ENCODE measurements at regions of chr15 and their contacts with region 1.

Region 1: DNA sequence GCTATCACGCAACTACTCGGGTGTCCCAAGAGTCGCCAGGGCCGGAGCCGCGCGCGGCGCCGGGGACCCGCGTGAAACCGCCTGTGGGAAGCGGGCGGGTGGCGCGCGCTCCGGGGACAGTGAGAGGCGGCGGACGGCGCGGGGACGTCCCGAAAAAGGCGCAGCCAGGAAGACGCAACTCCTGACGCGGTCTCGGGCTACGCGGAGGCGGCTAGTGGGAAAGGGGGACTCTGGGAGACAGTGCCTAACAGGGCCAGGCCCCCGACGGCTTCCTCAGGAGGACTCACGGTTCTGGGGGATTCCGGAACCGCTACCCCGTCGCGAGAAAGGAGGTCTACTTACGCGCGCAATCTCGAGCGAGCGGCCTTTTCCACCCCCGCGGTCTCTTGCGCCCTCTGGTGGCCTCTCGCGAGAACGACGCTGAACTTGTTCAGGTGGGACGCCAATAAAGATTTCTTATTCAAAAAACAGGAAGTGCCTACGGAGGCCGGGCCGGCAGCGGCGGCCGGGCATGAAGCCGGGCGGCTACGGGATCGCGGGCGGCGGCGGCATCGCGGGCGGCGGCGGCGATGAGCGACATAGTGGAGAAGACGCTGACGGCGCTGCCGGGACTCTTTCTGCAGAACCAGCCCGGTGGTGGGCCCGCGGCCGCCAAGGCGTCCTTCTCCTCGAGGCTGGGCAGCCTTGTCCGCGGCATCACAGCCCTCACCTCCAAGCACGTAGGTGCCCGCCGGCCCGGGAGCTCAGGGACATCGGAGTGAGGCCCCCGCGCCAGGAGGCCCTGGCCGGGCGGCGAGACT is at the start of gene AP4E1:
- DNase-seq: peak; percentile 89 to 97 (median 95)
- ATAC-seq: peak; percentile 52
- H3K4me3 ChIP-seq: peak within 1 kb of the TSS; percentile 74 to 85
- H3K4me3 Mint-ChIP-seq: peak within 1 kb of the TSS; percentile 89
- H3K27ac ChIP-seq: peak within 1 kb of the TSS; percentile 85 to 95
- H3K27ac Mint-ChIP-seq: peak within 1 kb of the TSS; percentile 99
- H3K4me1 ChIP-seq: peaks cover 11% of the 10 kb centered on the region
- H3K4me1 Mint-ChIP-seq: peaks cover 35% of the 10 kb centered on the region
- H3K27me3 ChIP-seq: no peaks in the 10 kb centered on the region
- H3K27me3 Mint-ChIP-seq: no peaks in the 10 kb centered on the region
- CTCF ChIP-seq: peak; percentile 94
- total RNA-seq, gene AP4E1: 6.8 to 8.1 TPM

Region 2: DNA sequence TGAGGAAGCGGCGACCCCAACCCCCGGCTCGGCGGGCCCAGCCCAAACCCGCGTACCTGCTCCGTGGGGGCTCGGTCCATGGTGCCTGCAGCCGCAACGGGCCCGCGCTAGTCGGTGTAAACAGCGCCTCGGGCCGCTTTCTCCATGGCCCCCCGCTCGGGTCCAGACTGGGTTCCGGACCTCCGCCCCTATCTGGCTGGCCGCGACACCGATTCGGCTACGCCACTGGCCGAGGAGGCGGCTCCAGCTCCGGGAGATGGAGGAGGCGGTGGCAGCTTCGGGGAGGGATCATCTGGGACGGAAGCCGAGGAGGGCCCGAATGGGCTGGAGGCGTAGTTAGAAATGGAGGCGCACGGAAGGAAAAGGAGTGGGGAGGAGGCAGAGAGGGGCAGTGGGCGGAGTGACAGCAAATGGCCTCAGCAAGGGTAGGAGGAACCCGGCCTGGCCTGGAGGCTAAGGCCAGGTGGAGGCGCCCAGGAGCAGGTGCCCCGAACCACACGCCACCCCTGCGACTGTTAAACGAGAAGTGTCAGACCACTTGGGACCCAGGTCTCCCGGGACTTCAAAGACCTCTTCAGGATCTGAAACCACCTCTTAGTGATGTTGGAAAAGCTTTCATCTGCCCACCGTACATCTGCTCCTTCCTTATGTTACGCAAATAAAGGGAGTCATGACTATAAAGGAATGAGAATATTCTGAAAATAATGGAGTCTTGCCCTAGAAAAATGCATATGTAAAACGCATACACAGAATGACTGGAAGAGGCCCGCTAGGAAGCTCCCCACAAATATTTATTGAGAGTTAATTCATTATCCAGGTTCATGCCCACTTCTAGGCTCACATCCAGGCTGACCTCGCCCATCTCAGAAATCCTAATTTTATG is 1861.9 kb before region 1 on chr15 and contains the start of gene SECISBP2L:
- CTCF ChIA-PET with region 1: no interaction called
- POLR2A ChIA-PET with region 1: no interaction called
- intact Hi-C with region 1: loop called (anchors 5 kb)
- DNase-seq: peak; percentile 76 to 95 (median 89)
- ATAC-seq: peak; percentile 94
- H3K4me3 ChIP-seq: peak within 1 kb of the TSS; percentile 89 to 95
- H3K4me3 Mint-ChIP-seq: peak within 1 kb of the TSS; percentile 97
- H3K27ac ChIP-seq: peak within 1 kb of the TSS; percentile 64 to 66
- H3K27ac Mint-ChIP-seq: peak within 1 kb of the TSS; percentile 91
- H3K4me1 ChIP-seq: peaks cover 30% of the 10 kb centered on the region
- H3K4me1 Mint-ChIP-seq: peaks cover 32% of the 10 kb centered on the region
- H3K27me3 ChIP-seq: no peaks in the 10 kb centered on the region
- H3K27me3 Mint-ChIP-seq: no peaks in the 10 kb centered on the region
- CTCF ChIP-seq: no peak
- total RNA-seq, gene SECISBP2L: 54.8 to 61.2 TPM

Region 3: DNA sequence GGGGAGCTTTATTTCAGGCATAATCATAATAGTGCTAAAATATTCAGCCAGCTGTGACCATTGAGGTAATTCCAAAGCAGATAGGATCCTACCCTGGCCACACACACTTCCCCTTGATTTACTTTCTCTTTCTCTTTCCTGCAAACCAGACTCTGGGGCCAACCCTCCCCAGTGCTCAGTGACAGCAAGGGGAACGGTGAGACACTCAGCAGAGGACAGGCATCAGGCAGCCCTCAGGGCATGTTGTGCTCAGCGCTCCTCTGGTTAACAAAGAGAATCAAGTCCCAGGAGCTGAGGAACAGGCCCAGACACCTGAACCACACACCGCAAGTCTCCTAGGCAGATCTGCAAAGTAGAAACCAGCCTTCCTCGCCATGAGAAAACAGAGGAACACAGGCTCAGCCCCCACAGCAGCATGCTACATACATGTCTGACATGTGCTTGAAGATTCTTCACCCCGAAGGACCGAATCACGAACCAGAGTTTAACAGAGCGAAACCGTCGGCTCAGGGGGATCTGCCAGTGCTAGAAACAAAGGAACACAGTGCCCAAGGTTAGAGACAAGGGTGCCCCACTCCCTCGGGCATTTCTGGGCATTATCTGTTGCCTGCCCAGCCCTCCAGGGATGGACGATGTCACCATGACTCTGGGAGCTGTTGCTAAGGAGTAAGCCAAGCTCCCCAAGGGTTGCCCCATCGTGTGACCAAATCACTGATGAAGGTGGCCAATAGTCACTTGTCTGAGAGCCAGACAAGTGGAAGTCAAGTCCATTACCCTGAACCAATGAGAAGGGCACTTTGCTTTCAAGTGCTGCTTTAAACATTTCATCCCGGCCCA is 660.4 kb before region 1 on chr15:
- CTCF ChIA-PET with region 1: no interaction called
- POLR2A ChIA-PET with region 1: no interaction called
- intact Hi-C with region 1: no loop called
- DNase-seq: peak in 5 of 9 experiments; percentile 15 to 79 (median 45)
- ATAC-seq: peak; percentile 96
- H3K4me3 ChIP-seq: peak overlapping the region; percentile 30
- H3K4me3 Mint-ChIP-seq: peak overlapping the region; percentile 80
- H3K27ac ChIP-seq: peak overlapping the region; percentile 39 to 64
- H3K27ac Mint-ChIP-seq: peak overlapping the region; percentile 92
- H3K4me1 ChIP-seq: peaks cover 11% of the 10 kb centered on the region
- H3K4me1 Mint-ChIP-seq: peaks cover 23% of the 10 kb centered on the region
- H3K27me3 ChIP-seq: no peaks in the 10 kb centered on the region
- H3K27me3 Mint-ChIP-seq: no peaks in the 10 kb centered on the region
- CTCF ChIP-seq: no peak

Region 4: GRCh38 chr15:50354838-50355618 is 553.4 kb before region 1 on chr15 and contains the start of gene GABPB1:
- CTCF ChIA-PET with region 1: no interaction called
- POLR2A ChIA-PET with region 1: interaction called, 5 read pairs
- intact Hi-C with region 1: loop called (anchors 1 to 2 kb)
- DNase-seq: peak; percentile 72 to 95 (median 85)
- ATAC-seq: peak; percentile 45
- H3K4me3 ChIP-seq: peak within 1 kb of the TSS; percentile 86 to 90
- H3K4me3 Mint-ChIP-seq: peak within 1 kb of the TSS; percentile 93
- H3K27ac ChIP-seq: peak within 1 kb of the TSS; percentile 94 to 97
- H3K27ac Mint-ChIP-seq: peak within 1 kb of the TSS; percentile 98
- H3K4me1 ChIP-seq: peaks cover 38% of the 10 kb centered on the region
- H3K4me1 Mint-ChIP-seq: peaks cover 55% of the 10 kb centered on the region
- H3K27me3 ChIP-seq: no peaks in the 10 kb centered on the region
- H3K27me3 Mint-ChIP-seq: no peaks in the 10 kb centered on the region
- CTCF ChIP-seq: no peak
- total RNA-seq, gene GABPB1: 27.0 to 31.0 TPM

Region 5: DNA sequence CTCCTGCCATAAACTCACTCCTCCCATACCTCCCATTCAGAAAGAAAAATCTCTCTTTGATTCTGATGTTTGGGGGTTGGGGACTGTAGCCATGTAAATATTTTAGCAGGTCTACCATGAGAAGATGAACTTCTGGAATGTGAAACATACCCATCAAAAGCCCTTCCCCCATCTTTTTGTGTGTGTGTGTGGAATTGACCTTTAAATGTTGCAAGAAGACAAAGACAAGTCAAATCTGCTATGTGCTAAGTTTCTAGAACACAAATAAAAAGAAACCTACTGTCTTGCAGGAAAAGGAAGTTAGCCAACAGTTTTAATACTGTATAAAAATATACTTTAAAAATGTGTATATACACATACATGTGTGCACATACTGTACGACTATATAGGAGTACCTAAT is 332.2 kb before region 1 on chr15:
- CTCF ChIA-PET with region 1: no interaction called
- POLR2A ChIA-PET with region 1: no interaction called
- intact Hi-C with region 1: loop called in 1 of 2 experiments (anchors 10 kb)
- DNase-seq: no peak
- ATAC-seq: no peak
- H3K4me3 ChIP-seq: no peak overlapping the region
- H3K4me3 Mint-ChIP-seq: no peak overlapping the region
- H3K27ac ChIP-seq: no peak overlapping the region
- H3K27ac Mint-ChIP-seq: peak overlapping the region; percentile 12
- H3K4me1 ChIP-seq: no peaks in the 10 kb centered on the region
- H3K4me1 Mint-ChIP-seq: no peaks in the 10 kb centered on the region
- H3K27me3 ChIP-seq: no peaks in the 10 kb centered on the region
- H3K27me3 Mint-ChIP-seq: no peaks in the 10 kb centered on the region
- CTCF ChIP-seq: no peak

Region 6: DNA sequence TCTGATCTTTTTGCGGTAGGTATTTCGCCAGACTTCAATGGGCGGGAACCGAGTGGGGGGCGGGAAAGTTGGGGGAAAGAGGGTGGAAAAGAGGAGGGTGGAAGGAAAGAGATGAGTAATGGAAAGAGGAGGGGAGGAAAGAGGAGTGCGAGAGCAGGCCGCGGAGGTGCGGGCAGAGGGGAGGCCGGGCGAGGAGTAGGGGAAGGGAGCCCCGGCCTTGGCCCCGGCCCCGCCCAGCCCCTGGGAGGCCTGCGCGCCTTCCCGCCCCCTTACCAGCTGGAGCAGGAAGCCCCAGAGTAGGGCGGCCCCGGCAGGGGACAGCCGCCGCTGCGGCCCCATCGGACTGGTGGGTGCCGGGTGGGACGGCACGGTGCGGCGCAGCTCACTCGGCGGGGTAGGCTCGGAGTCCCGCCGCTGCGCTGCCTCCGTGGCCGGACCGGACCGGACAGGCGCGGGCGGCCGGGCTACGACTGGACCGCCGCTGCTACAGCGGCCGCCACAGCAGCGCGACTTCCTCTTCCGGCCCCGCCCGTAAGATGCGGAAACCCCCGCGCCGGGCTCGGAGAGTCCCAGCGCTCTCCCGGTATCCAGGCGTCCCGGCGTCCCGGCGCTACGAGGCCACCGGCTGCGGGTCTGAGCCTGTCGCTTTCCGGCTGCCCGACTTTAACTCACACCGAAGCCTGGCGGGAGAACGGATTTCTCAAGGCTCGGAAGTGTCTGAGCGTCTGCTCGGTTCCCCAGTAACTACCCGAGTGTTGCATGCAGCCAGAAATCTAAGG is 143.0 kb before region 1 on chr15 and contains the start of gene SPPL2A:
- CTCF ChIA-PET with region 1: interaction called, 3 read pairs
- POLR2A ChIA-PET with region 1: no interaction called
- intact Hi-C with region 1: loop called (anchors 1 kb)
- DNase-seq: peak; percentile 50 to 90 (median 76)
- ATAC-seq: peak; percentile 91
- H3K4me3 ChIP-seq: peak within 1 kb of the TSS; percentile 69 to 77
- H3K4me3 Mint-ChIP-seq: peak within 1 kb of the TSS; percentile 90
- H3K27ac ChIP-seq: peak within 1 kb of the TSS; percentile 63 to 90
- H3K27ac Mint-ChIP-seq: peak within 1 kb of the TSS; percentile 92
- H3K4me1 ChIP-seq: peaks cover 20% of the 10 kb centered on the region
- H3K4me1 Mint-ChIP-seq: peaks cover 45% of the 10 kb centered on the region
- H3K27me3 ChIP-seq: no peaks in the 10 kb centered on the region
- H3K27me3 Mint-ChIP-seq: no peaks in the 10 kb centered on the region
- CTCF ChIP-seq: no peak
- total RNA-seq, gene SPPL2A: 33.4 to 36.8 TPM

Region 7: DNA sequence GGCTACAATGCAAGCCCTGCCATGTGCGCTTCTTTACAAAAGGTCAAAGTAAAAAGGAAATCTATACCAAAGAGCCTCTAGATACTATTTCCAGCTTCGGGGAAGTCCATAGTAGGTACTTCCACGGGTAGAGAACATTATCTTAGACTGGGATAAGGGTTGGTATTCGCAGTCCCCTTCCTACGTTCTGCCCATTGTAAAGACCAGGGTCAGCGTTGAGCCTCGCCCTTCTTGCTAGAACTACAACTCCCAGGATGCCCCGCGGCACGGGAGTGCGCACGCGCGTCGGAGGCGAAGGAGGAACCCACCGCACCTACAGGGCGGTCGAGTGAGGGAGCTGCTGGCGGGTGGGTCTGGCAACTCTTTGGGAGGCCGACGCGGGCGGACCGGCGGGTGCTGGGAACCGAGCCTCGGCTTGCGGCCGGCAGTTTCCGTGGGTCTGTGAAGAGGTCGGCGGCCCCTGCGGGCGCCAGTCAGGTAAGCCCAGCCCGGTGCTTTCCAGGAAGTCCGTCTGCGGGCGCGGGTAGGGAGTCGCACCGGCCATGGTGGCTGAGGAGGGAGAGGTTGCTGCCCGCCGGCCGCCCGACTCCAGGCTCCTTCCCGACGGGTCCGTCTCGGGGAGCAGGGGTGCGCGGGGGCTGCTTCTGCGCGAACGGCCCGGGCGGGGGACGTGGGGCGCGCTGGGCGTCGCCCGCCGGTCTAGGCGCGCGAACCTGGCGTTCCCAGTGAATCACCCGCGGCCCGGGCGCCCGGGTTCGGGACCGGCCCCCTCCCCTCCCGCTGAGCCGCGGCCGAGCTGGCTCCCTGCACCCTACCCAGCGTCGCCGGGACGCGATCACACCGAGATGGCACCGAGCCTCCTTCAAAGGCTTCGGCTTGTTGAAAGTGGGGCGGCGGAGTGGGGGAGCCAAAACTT is 921.2 kb after region 1 on chr15 and contains the start of gene TMOD3:
- CTCF ChIA-PET with region 1: no interaction called
- POLR2A ChIA-PET with region 1: no interaction called
- intact Hi-C with region 1: loop called in 1 of 2 experiments (anchors 5 kb)
- DNase-seq: peak; percentile 74 to 94 (median 90)
- ATAC-seq: peak; percentile 83
- H3K4me3 ChIP-seq: peak within 1 kb of the TSS; percentile 64 to 83
- H3K4me3 Mint-ChIP-seq: peak within 1 kb of the TSS; percentile 99
- H3K27ac ChIP-seq: peak within 1 kb of the TSS; percentile 66 to 74
- H3K27ac Mint-ChIP-seq: peak within 1 kb of the TSS; percentile 95
- H3K4me1 ChIP-seq: peaks cover 38% of the 10 kb centered on the region
- H3K4me1 Mint-ChIP-seq: peaks cover 42% of the 10 kb centered on the region
- H3K27me3 ChIP-seq: no peaks in the 10 kb centered on the region
- H3K27me3 Mint-ChIP-seq: no peaks in the 10 kb centered on the region
- CTCF ChIP-seq: no peak
- total RNA-seq, gene TMOD3: 32.7 to 32.9 TPM